HEK293T (cell line): ENCODE measurements at regions of chr10 and their contacts with region 1.

Region 1: GRCh38 chr10:121886997-121887622 is 40.7 kb downstream of the ATE1 start:
- DNase-seq: peak; percentile 83

Region 2: DNA sequence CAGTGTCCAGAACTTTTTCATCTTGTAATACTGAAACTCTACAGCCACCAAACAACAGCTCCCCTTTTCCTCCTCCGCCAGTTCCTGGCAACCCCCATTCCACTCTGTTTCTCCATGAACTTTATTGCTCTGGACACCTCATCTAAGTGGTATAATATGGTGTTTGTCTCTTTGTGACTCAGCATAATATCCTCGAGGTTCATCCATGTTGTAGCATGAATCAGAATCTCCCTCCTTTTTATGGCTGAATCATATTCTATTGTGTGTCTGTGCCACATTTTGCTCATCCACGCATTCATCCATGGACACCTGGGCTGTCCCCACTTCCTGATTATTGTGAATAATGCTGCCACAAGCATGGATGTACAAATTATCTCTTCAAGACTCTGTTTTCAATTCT is 164.4 kb before region 1 on chr10:
- CTCF ChIA-PET with region 1: no interaction called
- POLR2A ChIA-PET with region 1: no interaction called
- DNase-seq: no peak

Region 3: DNA sequence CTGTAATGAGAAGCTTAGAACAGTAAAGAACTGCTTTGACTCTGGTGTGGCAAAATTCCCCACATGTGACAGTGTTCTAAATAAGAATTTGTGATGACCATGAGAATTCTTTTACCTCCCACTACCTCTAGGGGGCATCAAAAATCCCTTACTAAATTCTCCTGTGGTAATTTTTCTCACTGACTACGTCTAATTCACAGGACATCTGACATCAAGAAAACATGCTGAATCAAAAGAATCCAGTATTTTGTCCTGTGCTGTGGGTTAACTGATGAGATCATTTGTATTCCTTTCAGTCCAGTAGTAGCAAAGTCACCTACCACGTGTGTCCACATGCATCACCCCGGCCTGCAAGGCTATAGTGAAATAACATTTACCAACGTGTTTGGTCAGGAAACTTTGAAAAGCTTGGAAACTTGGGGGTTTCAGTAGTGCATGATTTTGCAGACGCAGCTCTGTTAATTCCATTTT is 63.1 kb before region 1 on chr10:
- CTCF ChIA-PET with region 1: interaction called, 23 read pairs
- POLR2A ChIA-PET with region 1: interaction called, 3 read pairs
- DNase-seq: peak; percentile 57

Region 4: GRCh38 chr10:121900443-121901174 is 13.5 kb after region 1 on chr10:
- CTCF ChIA-PET with region 1: interaction called, 11 read pairs
- POLR2A ChIA-PET with region 1: no interaction called
- DNase-seq: peak; percentile 67

Region 5: GRCh38 chr10:121910673-121911420 is 23.7 kb after region 1 on chr10:
- CTCF ChIA-PET with region 1: no interaction called
- POLR2A ChIA-PET with region 1: no interaction called
- DNase-seq: no peak

Region 6: DNA sequence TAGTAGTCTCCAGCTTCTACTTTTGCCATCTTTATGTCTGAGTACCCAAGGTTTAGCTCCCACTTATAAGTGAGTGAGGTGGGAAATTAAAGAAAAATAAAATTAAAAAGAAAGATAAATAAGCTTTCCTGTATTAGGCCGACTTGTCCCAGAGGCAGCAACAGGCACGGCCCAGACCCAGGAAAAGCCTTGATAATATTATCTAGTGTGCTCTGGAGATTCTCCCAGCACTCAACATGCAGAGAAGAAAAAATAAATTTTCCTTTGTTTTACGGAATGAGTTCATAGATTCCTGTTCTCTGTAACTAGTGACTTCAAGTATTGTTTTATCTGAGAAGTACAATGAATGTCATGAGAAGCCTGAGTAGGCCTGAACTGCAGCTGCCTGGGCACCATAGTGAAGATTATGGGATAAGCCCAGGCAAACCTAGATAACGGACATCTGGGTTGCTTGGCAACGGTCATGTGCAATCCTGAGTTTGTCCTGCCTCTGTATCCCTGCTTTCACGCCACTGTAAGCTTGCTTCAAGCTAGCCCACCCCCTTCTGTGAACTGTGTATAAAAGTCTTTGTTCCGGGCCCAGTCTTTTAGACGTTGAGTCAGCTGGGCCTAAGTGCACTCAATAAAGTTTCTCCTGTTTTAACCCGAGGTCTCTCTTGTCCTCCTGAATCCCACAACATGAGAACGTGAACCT is 34.3 kb after region 1 on chr10:
- CTCF ChIA-PET with region 1: no interaction called
- POLR2A ChIA-PET with region 1: no interaction called
- DNase-seq: no peak